ENCODE measurements at regions of chr17 and their contacts with region 1.

Region 1: GRCh38 chr17:72120642-72121163 is at the start of gene SOX9:
- DNase-seq: peak; percentile 88 to 98 (median 92)

Region 2: DNA sequence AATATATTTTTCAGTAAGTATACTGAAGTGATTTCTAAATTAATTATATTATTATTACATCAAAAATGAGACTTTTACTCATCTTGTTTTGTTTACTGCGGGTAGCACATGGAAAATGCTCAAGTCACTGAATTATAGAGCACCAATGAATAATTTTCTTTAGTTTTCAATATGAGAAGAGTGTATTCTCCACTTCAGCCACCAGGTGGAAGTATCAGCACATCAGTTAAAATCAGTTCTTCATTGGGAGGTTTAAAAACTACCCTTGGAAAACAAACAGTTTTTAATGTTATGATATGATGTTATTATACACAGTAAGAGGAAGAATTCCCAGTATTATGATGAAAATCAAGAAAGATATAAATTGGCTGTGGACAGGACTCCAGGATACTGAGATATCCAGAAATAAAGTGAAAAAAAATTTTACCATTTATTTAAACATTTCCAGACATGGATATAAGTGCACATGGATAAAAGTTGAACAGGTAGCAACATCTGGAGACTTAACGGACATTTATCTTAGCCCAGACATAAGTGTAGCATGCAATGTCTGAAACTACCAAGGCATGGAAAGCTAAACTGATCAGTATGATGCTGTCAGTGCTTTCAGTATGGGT is 1484.1 kb before region 1 on chr17:
- intact Hi-C with region 1: loop called (anchors 2 kb)
- DNase-seq: no peak

Region 3: DNA sequence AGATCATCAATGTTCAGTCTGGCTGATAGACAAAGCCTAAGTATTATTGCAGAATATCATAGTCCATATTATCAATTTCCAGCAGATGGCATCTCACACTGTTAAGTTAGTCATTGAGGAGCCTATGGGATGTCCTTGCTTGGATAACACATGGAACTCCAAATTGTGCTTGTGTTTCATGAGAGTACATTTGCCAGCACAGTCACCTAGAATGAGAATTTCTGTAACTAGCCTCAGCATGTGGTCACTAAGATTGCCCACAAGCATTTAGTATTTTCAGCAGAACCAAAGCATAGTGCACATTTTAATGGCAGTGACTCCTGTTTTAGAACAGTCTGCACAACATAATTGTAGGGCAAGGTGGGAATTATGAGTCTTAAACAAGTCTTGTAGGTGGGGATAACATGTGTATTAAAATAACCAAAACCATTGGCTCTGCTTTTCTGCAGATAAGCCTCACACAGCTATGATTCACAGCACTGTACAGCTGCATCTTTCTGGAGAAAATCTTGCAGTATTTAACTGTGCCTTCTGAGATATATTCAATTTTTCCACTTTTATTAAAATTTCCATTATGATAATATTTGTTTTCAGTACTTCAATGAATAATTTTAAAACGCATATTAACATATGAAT is 882.7 kb before region 1 on chr17:
- intact Hi-C with region 1: loop called (anchors 5 kb)
- DNase-seq: no peak

Region 4: DNA sequence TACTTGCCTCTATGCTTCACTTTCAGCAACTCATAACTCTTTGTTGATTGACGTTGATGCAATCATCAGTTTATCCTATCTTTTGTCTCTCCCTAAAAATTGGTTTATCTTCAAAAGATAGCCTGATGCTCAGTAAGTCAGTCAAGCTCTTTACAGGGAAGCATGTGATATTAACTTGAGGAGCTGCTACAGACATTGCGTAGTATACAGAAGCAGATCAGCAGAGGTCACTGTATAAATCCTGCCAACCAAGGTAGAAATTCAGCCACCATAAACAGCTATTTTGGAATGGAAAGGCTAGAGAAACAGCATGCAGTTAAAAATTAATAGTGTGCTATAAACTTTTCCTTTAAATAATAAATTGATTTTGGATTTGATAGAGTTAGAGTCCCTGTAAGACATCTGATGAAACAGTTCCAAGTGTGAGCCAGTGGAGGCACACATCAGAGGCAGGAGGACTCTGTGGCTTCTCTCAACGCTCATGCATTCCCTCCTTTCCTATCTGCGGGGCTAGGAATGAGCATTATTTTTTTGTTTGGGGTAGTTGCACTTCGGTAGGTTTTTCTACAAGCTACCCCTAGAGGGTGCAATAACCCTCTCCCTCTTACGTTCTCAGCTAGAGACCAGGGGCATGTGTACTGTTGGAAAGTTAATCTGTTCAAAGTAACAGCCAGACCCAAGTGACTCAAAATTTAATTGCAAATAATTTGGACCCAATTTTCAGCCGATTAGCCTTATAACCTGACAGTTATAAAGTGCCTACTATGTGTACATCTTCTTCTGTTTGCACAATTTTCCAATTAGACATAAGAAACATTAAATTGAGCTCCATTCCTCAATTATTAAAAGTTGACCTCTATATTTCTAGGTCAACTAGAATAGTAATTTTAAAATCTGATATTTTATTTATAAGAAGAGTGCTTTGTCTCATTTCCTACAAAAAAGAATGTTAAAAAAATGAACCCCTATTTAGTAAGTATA is 647.6 kb before region 1 on chr17:
- intact Hi-C with region 1: loop called (anchors 2 kb)
- DNase-seq: no peak

Region 5: DNA sequence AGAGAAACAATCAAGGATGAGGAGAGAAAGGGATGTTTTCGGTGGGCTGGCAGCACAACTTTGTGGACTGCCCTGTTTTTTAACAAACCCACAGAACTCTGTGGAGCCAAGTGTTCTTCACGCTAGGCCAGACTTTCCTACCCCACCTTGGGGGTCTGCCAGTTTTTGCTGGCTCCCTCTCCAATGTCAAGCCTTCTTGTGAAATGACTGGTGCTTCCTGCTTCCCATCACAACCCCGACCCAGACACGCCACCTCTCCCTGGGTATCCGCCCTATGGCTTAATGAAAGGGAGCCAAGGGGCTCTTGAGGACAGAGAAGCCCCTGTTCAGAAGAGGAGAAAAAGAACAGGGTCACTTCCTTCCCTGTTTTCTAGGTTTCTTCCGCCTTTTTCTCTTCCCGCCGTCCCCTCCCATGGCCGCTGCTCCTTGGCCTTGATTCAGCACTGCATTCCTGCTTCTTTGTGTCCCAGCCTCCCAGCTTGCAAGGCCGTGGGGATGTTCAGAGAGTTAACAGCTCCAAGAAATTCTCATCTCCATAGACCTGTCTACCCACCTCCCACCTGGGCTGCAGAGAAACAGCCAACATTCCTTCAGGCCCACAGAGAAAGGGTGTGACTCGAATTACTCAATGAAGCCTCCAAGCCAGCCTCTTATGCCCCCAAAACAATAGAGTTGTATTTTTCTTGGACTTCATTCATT is 16.4 kb before region 1 on chr17:
- intact Hi-C with region 1: no loop called
- DNase-seq: peak in 2 of 10 donors; percentile 27 to 77

Region 6: DNA sequence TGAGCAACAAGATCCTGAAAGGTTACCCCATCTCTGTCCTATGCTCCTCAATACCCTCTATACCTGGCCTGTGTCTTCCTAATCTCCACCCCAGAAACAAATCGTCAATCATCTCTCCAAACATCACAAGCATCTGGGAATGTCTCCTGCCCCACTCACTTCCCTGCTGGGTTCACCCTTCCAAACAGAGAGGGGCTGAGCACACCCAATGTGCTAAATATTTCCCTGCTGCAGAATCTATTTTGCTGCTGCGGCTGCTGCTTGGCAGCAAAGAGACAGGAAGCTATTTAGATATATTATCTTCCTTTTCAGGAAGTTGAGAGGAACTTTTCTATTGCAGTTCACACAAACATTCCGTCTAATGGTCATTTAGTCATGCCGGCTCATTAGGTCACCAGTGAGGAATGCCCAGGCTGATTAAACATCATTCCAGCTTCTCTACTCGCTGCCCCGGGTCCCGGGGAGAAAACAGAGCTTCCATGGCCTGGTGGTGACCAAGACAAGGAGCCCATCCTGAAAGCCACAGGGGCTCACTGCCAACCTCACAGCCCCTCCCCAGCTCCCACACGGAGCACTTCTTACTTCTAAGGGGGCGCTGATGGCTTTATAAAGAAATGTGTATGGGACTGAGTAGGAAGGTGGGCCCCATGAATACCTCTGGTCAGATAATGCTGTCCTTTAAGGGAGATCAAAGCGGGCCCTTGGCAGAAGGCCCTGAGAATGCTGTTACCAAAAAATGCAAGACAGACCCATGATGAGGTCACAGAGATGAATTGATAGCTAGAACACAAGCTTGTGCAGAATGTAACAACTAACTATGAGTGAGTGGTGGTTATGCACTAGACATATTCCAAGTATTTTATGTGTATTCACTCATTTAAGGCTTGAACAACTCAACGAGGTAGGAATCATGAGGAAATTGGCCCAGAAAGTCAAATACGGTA is 218.4 kb after region 1 on chr17:
- intact Hi-C with region 1: loop called (anchors 10 kb)
- DNase-seq: no peak

Region 7: GRCh38 chr17:72421128-72422092 is 300.7 kb after region 1 on chr17:
- intact Hi-C with region 1: loop called (anchors 10 kb)
- DNase-seq: peak in 1 of 10 donors; percentile 67

Region 8: DNA sequence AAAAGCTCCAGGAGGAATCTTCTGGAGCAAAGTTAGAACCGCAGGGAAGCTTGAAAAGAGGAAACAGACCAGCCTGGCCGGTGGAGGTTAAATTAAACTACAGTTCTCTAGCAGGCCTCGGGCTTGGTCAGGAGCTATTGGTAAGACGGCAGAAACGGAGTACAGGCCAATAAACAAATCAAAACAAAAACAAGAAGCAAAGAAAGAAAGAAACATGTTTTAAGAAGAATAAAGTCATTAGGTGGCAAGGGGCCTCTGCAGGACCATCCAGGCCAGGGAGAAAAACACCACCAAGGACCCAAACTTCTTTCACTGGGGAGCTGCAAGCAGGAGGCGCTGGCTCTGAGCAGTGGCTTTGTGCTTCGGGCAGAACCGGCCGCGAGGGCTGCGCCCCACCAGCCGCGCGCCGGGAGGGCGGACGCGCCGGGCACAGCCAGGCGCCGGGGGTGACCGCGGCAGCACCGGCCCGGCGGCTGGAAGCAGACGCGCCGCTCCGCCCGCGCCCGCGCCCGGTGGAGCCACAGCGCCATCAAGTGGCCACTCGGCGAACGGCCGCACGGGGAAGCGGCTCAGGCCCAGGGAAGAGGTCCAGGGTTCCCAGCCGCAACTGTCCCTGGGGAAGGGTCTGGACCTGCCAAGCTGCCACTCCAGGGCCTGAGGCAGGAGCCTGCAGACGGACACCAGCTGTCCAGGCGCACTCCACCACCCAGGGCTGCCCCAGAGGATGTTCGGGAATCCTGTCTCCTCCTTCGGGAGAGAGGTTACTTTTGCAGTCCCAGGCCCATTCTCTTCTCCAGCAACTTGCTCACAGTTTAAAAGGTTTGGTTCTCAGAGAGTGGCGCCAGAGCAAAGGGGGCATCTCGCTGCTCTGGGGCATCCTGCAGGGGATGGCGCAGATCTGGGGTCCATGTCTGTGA is 419.5 kb after region 1 on chr17:
- intact Hi-C with region 1: loop called (anchors 2 kb)
- DNase-seq: peak; percentile 48 to 97 (median 83)

Region 9: DNA sequence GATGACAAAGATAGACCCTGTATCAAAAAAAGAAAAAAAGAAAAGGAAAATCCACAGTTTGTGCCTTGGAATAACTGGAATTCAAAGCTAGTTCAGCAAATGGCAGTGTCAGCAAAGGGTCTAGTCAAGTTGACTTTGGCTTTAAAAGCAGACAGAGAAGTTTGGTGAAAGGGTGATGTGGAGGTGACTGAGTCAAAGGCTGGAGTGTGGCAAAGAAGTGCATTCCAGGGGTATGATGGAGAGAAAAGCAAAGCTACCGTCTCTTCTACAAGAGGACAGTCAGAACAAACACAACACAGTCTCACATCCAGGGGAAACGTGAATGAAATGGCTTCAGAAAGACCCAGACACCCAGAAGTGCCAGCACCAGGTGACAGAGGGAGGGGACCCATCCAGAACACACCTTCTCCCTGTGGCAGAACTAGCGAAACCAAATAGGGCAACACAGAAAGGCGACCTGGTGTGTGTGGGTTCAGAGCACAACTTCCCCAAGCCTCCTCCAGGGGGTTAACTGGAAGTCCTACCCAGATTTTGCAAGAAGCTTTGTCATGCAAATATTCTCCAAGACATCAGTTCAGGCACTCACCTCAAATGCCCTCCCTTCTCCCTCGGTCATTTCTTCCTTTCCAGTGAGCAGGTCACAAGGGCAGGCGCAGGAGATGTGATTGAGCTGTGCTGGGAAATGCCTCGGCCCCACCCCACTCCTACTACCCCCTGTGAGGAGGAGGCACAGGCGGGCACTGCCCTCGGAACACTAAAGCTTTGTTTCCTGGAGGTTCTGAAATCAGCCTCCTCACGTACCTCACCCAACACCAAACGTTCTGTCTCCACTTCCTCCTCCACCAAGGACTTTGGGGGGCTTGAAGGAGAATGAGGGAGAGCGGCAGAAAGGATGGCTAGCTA is 482.1 kb after region 1 on chr17:
- intact Hi-C with region 1: no loop called
- DNase-seq: no peak